ENCODE measurements at regions of chr5 and their contacts with region 1.

Region 1: DNA sequence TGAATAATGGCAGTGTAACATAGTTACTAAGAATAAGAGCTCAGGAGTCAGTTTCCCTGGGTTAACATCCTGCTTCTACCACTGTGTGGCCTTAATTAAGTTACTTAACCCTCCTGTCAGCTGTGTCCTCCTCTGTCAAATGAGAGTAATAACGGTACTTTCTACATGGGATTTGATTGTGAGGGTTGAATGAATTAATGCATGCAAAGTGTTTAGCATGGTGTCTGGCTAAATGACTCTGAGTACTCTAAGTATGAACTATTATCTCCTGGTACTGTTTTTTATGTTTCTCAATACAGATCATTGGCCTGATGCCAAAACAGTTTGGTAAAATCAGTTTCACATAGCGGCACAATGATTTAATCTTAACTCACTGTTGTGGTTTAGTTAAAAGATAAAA is 19.6 kb downstream of the ZNF131 start:
- DNase-seq: no peak
- H3K4me3 ChIP-seq: no peak overlapping the region
- H3K27ac ChIP-seq: no peak overlapping the region
- H3K4me1 ChIP-seq: no peaks in the 10 kb centered on the region
- H3K27me3 ChIP-seq: no peaks in the 10 kb centered on the region
- CTCF ChIP-seq: no peak
- POLR2A ChIP-seq: no peak

Region 2: GRCh38 chr5:42423285-42424165 is 716.8 kb before region 1 on chr5 and contains the start of gene GHR:
- intact Hi-C with region 1: loop called (anchors 10 kb)
- DNase-seq: peak; percentile 76 to 84
- H3K4me3 ChIP-seq: peak within 1 kb of the TSS; percentile 66 to 81 (median 71)
- H3K27ac ChIP-seq: peak within 1 kb of the TSS; percentile 77 to 91
- H3K4me1 ChIP-seq: no peaks in the 10 kb centered on the region
- H3K27me3 ChIP-seq: no peaks in the 10 kb centered on the region
- CTCF ChIP-seq: peak; percentile 75 to 84 (median 76)
- POLR2A ChIP-seq: no peak
- total RNA-seq, gene GHR: 25.6 to 234 (median 26.5) TPM

Region 3: GRCh38 chr5:42583322-42583721 is 557.0 kb before region 1 on chr5:
- intact Hi-C with region 1: no loop called
- DNase-seq: peak in 1 of 2 donors; percentile 79
- H3K4me3 ChIP-seq: no peak overlapping the region
- H3K27ac ChIP-seq: no peak overlapping the region
- H3K4me1 ChIP-seq: no peaks in the 10 kb centered on the region
- H3K27me3 ChIP-seq: no peaks in the 10 kb centered on the region
- CTCF ChIP-seq: peak; percentile 69 to 77 (median 73)
- POLR2A ChIP-seq: no peak